ENCODE measurements at regions of chr20 and their contacts with region 1.

Region 1: GRCh38 chr20:44210422-44211176 is at the start of gene OSER1:
- DNase-seq: peak; percentile 98 to 99
- H3K4me3 ChIP-seq: peak within 1 kb of the TSS; percentile 78 to 98
- H3K27ac ChIP-seq: peak within 1 kb of the TSS; percentile 96 to 99
- H3K4me1 ChIP-seq: peaks cover 0 to 52% (median 32%) of the 10 kb centered on the region in 4 donors
- H3K27me3 ChIP-seq: no peaks in the 10 kb centered on the region
- CTCF ChIP-seq: no peak

Region 2: GRCh38 chr20:44056010-44056698 is 154.4 kb before region 1 on chr20:
- intact Hi-C with region 1: no loop called
- DNase-seq: peak in 1 of 2 donors; percentile 41
- H3K4me3 ChIP-seq: no peak overlapping the region
- H3K27ac ChIP-seq: no peak overlapping the region
- H3K4me1 ChIP-seq: no peaks in the 10 kb centered on the region
- H3K27me3 ChIP-seq: no peaks in the 10 kb centered on the region
- CTCF ChIP-seq: peak in 1 of 2 experiments; percentile 16

Region 3: DNA sequence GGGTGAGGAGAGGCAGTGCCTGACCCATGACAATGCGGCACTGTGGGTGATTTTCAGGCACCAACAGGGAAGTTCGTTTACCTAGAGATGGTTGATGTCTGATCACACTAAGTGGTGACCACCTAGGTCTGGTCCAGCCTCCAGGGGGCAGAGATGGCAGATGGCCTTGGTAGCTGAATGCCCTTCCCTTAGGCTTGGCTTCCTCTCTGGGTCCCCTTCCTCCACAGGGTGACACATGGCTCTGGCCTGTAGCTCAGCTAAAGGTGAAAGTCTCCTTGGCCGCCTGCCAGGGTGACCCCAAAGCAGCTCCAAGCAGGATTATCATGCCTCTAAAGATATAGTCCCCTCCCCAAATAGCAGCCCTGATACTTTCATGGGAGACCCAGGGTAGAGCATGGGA is 42.9 kb after region 1 on chr20:
- intact Hi-C with region 1: no loop called
- DNase-seq: no peak
- H3K4me3 ChIP-seq: no peak overlapping the region
- H3K27ac ChIP-seq: no peak overlapping the region
- H3K4me1 ChIP-seq: no peaks in the 10 kb centered on the region
- H3K27me3 ChIP-seq: peaks cover 0 to 3% of the 10 kb centered on the region in 2 donors
- CTCF ChIP-seq: no peak

Region 4: GRCh38 chr20:44407402-44408184 is 197.0 kb after region 1 on chr20:
- intact Hi-C with region 1: no loop called
- DNase-seq: no peak
- H3K4me3 ChIP-seq: no peak overlapping the region
- H3K27ac ChIP-seq: no peak overlapping the region
- H3K4me1 ChIP-seq: no peaks in the 10 kb centered on the region
- H3K27me3 ChIP-seq: peaks cover 0 to 5% of the 10 kb centered on the region in 2 donors
- CTCF ChIP-seq: no peak

Region 5: DNA sequence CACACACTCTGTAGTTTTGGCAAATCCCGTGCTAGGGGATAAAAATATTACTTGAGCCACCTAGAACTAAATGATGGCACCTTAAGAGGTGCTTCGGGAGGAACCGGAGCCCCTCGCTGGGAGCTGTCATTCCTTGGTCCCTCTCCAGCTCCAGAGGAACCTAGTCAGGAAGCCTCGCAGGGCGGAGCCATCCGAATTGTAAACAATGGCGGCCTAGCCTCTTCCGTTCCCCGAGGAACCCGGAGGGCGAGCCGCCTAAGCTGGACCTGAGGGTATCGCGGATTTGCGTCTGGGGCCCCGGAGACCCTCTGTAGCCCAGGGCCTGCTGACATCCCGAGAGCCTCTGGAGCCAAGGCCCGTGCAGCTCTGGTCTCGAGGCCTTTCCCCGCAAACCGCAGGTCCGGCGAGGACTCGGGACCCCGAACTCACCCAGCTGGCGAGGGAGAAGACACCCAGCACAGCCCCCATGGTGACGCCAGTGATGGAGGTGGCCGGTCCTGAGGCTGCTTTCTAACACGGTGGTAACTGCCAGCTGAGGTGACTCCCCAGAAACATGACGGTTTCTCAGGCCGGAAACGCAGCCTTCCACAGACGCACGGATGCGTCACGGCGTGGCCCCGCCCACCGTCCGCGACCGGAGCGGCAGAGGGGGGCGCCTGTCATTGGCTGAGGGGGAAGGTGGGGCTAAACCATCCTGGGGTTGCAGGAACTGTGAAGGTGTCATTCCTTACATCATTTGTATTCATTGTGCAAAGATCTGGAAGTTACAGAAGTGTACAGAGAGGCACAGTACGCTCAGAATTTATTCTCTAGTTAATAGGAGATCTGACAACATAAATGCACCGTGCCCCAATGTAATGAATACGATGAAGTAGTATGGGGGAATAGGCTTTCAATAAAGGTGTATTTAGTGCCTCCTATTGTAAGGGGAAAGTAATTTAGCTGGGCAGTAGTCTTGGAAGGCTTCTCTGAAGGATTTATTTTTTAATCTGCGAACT is 311.2 kb after region 1 on chr20 and contains the start of gene SERINC3:
- intact Hi-C with region 1: loop called (anchors 10 kb)
- DNase-seq: peak; percentile 96 to 99
- H3K4me3 ChIP-seq: peak within 1 kb of the TSS; percentile 71 to 92
- H3K27ac ChIP-seq: peak within 1 kb of the TSS; percentile 95 to 98
- H3K4me1 ChIP-seq: peaks cover 0 to 51% (median 29%) of the 10 kb centered on the region in 4 donors
- H3K27me3 ChIP-seq: no peaks in the 10 kb centered on the region
- CTCF ChIP-seq: no peak